ENCODE measurements at regions of chr1 and their contacts with region 1.

Region 1: GRCh38 chr1:240888039-240888786 is 276.3 kb upstream of the GREM2 start:
- DNase-seq: peak; percentile 64
- H3K4me3 ChIP-seq: no peak overlapping the region
- H3K27ac ChIP-seq: no peak overlapping the region
- H3K4me1 ChIP-seq: no peaks in the 10 kb centered on the region
- CTCF ChIP-seq: peak; percentile 99

Region 2: DNA sequence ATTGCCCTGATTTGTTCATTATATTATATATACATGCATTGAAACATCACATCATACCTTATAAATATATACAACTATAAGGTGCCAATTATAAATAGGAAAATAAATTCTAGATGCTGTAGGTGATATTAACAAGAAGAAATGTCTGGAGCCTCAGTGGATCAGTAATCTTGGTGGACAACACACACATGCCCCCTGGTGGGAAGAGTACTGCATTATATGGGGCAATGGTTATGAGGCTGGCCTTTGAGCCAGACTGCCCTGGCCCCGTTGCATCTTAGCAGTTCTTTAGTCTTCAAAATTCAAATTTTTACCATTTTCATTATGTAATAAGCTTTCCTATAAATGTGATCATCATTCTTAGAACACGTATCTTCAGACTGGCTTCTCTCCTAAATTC is 58.7 kb after region 1 on chr1:
- CTCF ChIA-PET with region 1: no interaction called
- POLR2A ChIA-PET with region 1: no interaction called
- intact Hi-C with region 1: loop called (anchors 1 kb)
- DNase-seq: peak; percentile 63
- H3K4me3 ChIP-seq: no peak overlapping the region
- H3K27ac ChIP-seq: no peak overlapping the region
- H3K4me1 ChIP-seq: no peaks in the 10 kb centered on the region
- CTCF ChIP-seq: peak; percentile 82

Region 3: DNA sequence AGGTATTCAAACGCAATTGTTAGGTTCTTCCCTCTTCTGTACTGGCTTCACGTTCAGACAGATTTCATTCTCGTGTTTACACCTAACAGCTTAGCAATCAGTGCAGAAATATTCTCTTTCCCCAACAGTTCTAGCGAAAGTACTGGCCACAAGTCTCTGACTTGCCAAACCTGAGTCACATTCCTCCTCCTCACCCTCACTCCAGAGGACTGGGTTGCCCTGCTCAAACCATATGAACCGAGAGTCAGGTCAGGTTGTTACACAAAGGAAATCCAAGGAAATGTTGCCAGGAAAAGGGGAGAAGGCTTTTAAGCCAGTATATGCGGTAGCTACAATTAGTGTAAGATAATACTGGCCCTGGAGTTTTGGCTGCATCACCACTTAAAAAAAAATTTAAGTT is 186.3 kb after region 1 on chr1:
- CTCF ChIA-PET with region 1: no interaction called
- POLR2A ChIA-PET with region 1: no interaction called
- intact Hi-C with region 1: no loop called
- DNase-seq: no peak
- H3K4me3 ChIP-seq: no peak overlapping the region
- H3K27ac ChIP-seq: no peak overlapping the region
- H3K4me1 ChIP-seq: no peaks in the 10 kb centered on the region
- CTCF ChIP-seq: no peak

Region 4: DNA sequence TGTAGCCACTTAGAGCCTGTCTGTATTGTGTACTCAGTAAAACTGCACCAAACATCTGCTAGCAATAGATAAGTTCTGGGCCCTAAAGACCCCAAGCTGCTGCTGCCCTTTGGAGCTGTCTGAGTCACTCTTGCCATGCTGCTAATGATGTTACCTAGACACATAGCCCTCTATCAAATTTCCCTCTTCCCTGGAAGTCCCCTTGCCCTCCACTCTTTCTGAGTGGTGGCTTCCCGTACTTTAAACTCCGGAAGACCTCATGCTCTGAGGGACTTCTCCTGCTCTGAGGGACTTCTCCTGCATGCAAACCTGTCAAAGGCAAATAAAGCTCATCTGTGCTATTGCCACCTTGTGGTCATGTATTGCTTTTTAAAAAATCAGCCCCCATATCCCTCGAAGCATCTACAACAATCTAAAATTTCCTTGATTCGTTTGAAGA is 597.4 kb after region 1 on chr1:
- CTCF ChIA-PET with region 1: no interaction called
- POLR2A ChIA-PET with region 1: no interaction called
- intact Hi-C with region 1: loop called (anchors 5 kb)
- DNase-seq: peak; percentile 44
- H3K4me3 ChIP-seq: no peak overlapping the region
- H3K27ac ChIP-seq: no peak overlapping the region
- H3K4me1 ChIP-seq: no peaks in the 10 kb centered on the region
- CTCF ChIP-seq: peak; percentile 80